ENCODE measurements at regions of chr13 and their contacts with region 1.

Region 1: GRCh38 chr13:111046590-111047141 is 68.4 kb upstream of the ARHGEF7 start:
- DNase-seq: no peak
- ATAC-seq: peak; percentile 49 to 56

Region 2: DNA sequence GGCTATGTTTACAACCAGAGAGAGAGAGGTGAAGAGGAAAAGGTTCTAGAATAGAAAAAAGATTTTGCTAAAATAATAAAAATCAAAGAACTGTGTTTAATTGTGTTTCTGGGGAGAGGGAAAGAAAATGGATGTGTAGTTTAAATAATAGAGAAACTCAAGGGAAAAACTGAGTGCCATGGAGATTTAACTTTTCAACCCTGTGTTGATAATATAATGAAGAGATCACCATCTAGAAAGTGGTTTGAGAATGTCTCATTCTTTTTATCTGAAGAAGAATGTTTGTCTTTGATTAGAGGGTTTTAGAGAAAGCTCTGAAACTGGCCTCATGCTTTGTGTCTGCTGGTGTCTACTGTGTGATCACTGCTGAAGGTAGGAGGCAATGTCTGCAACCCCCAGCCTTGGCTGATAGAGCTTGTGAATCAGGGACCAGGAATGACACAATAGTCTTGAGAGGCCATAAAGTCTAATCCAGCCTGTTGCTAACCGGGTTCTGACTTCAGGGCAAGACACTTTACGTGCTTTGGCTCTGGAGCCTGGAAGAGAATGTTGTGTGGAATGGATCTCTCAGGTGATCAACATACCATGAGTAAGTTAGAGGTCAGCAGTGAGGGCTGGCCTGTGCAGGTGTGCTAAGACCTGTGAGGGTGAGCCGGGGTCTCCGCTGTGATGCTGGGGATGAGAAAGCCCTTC is 734.2 kb before region 1 on chr13:
- intact Hi-C with region 1: no loop called
- DNase-seq: no peak
- ATAC-seq: peak in 1 of 2 donors; percentile 17

Region 3: GRCh38 chr13:110593430-110594130 is 453.1 kb before region 1 on chr13:
- intact Hi-C with region 1: loop called in 1 of 2 experiments (anchors 10 kb)
- DNase-seq: no peak
- ATAC-seq: peak; percentile 78 to 89

Region 4: GRCh38 chr13:110726726-110727125 is 319.9 kb before region 1 on chr13:
- intact Hi-C with region 1: loop called in 1 of 2 experiments (anchors 10 kb)
- DNase-seq: no peak
- ATAC-seq: no peak

Region 5: DNA sequence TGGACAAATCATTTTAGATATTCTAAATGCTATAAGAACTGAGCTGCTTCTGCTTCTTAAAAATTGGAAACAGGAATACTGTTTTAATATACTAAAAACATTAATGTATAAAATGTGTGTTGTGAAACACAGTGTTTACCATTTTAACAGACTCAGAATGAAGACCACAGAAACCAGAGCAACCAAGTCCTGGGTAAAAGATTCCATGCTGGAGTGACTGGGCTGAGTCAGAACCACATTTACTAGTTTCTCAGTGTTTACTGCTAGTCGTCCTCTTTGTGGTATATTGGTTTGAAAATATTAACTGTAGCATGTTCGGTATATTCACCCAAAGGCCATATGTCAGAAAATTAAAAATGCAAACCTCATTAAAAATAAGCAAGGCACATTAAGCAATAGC is 163.7 kb before region 1 on chr13:
- intact Hi-C with region 1: no loop called
- DNase-seq: no peak
- ATAC-seq: no peak

Region 6: GRCh38 chr13:110925023-110925612 is 121.5 kb before region 1 on chr13:
- intact Hi-C with region 1: loop called in 1 of 2 experiments (anchors 10 kb)
- DNase-seq: no peak
- ATAC-seq: no peak

Region 7: GRCh38 chr13:111304041-111304544 is 257.4 kb after region 1 on chr13:
- intact Hi-C with region 1: no loop called
- DNase-seq: no peak
- ATAC-seq: no peak

Region 8: GRCh38 chr13:111584101-111584672 is 537.5 kb after region 1 on chr13:
- intact Hi-C with region 1: no loop called
- DNase-seq: no peak
- ATAC-seq: no peak